CD4-positive, alpha-beta memory T cell (primary cell): ENCODE measurements at regions of chr20 and their contacts with region 1.

Region 1: GRCh38 chr20:815914-816606 is 17.5 kb upstream of the FAM110A start:
- DNase-seq: peak; percentile 59 to 67 (median 64)
- H3K4me3 ChIP-seq: no peak overlapping the region
- H3K4me3 Mint-ChIP-seq: no peak overlapping the region
- H3K27ac ChIP-seq: no peak overlapping the region
- H3K27ac Mint-ChIP-seq: peak overlapping the region in 3 of 7 donors; percentile 65 to 86 (median 65)
- H3K4me1 ChIP-seq: no peaks in the 10 kb centered on the region
- H3K4me1 Mint-ChIP-seq: peaks cover 3 to 5% (median 4%) of the 10 kb centered on the region in 4 donors
- H3K27me3 ChIP-seq: no peaks in the 10 kb centered on the region
- H3K27me3 Mint-ChIP-seq: peaks cover 15 to 18% of the 10 kb centered on the region in 2 donors

Region 2: GRCh38 chr20:881051-881782 is 65.2 kb after region 1 on chr20:
- CTCF ChIA-PET with region 1: no interaction called
- POLR2A ChIA-PET with region 1: no interaction called
- intact Hi-C with region 1: no loop called
- DNase-seq: no peak
- H3K4me3 ChIP-seq: no peak overlapping the region
- H3K4me3 Mint-ChIP-seq: no peak overlapping the region
- H3K27ac ChIP-seq: no peak overlapping the region
- H3K27ac Mint-ChIP-seq: peak overlapping the region in 3 of 7 donors; percentile 25 to 55 (median 51)
- H3K4me1 ChIP-seq: no peaks in the 10 kb centered on the region
- H3K4me1 Mint-ChIP-seq: peaks cover 0 to 6% (median 3%) of the 10 kb centered on the region in 4 donors
- H3K27me3 ChIP-seq: no peaks in the 10 kb centered on the region
- H3K27me3 Mint-ChIP-seq: peaks cover 7% of the 10 kb centered on the region in 2 donors

Region 3: GRCh38 chr20:911879-912605 is 96.0 kb after region 1 on chr20:
- CTCF ChIA-PET with region 1: interaction called, 3 read pairs
- POLR2A ChIA-PET with region 1: no interaction called
- intact Hi-C with region 1: loop called (anchors 1 kb)
- DNase-seq: peak in 2 of 5 donors; percentile 1 to 4
- H3K4me3 ChIP-seq: no peak overlapping the region
- H3K4me3 Mint-ChIP-seq: no peak overlapping the region
- H3K27ac ChIP-seq: no peak overlapping the region
- H3K27ac Mint-ChIP-seq: no peak overlapping the region
- H3K4me1 ChIP-seq: no peaks in the 10 kb centered on the region
- H3K4me1 Mint-ChIP-seq: peaks cover 0 to 2% (median 0%) of the 10 kb centered on the region in 4 donors
- H3K27me3 ChIP-seq: no peaks in the 10 kb centered on the region
- H3K27me3 Mint-ChIP-seq: peaks cover 0 to 8% of the 10 kb centered on the region in 2 donors